Endothelial cell of umbilical vein (primary cell): ENCODE measurements at regions of chr3 and their contacts with region 1.

Region 1: GRCh38 chr3:197256836-197257444 is 41.5 kb downstream of the DLG1 start:
- DNase-seq: peak; percentile 71
- H3K4me3 ChIP-seq: no peak overlapping the region
- H3K27ac ChIP-seq: no peak overlapping the region
- H3K4me1 ChIP-seq: no peaks in the 10 kb centered on the region
- H3K27me3 ChIP-seq: no peaks in the 10 kb centered on the region
- CTCF ChIP-seq: peak; percentile 34 to 50
- POLR2A ChIP-seq: no peak

Region 2: GRCh38 chr3:197224034-197224444 is 32.9 kb before region 1 on chr3:
- CTCF ChIA-PET with region 1: interaction called, 16 read pairs
- POLR2A ChIA-PET with region 1: no interaction called
- dilution Hi-C with region 1: no loop called
- intact Hi-C with region 1: no loop called
- DNase-seq: peak; percentile 64
- H3K4me3 ChIP-seq: no peak overlapping the region
- H3K27ac ChIP-seq: no peak overlapping the region
- H3K4me1 ChIP-seq: no peaks in the 10 kb centered on the region
- H3K27me3 ChIP-seq: no peaks in the 10 kb centered on the region
- CTCF ChIP-seq: peak; percentile 26
- POLR2A ChIP-seq: no peak

Region 3: GRCh38 chr3:197244751-197245150 is 12.2 kb before region 1 on chr3:
- CTCF ChIA-PET with region 1: interaction called, 11 read pairs
- POLR2A ChIA-PET with region 1: no interaction called
- dilution Hi-C with region 1: no loop called
- intact Hi-C with region 1: no loop called
- DNase-seq: no peak
- H3K4me3 ChIP-seq: no peak overlapping the region
- H3K27ac ChIP-seq: no peak overlapping the region
- H3K4me1 ChIP-seq: no peaks in the 10 kb centered on the region
- H3K27me3 ChIP-seq: no peaks in the 10 kb centered on the region
- CTCF ChIP-seq: no peak
- POLR2A ChIP-seq: no peak

Region 4: GRCh38 chr3:197292083-197292646 is 35.2 kb after region 1 on chr3:
- CTCF ChIA-PET with region 1: interaction called, 10 read pairs
- POLR2A ChIA-PET with region 1: no interaction called
- dilution Hi-C with region 1: no loop called
- intact Hi-C with region 1: no loop called
- DNase-seq: no peak
- H3K4me3 ChIP-seq: no peak overlapping the region
- H3K27ac ChIP-seq: no peak overlapping the region
- H3K4me1 ChIP-seq: peaks cover 19% of the 10 kb centered on the region
- H3K27me3 ChIP-seq: no peaks in the 10 kb centered on the region
- CTCF ChIP-seq: no peak
- POLR2A ChIP-seq: no peak

Region 5: GRCh38 chr3:197466586-197467399 is 209.9 kb after region 1 on chr3:
- CTCF ChIA-PET with region 1: interaction called, 19 read pairs
- POLR2A ChIA-PET with region 1: no interaction called
- dilution Hi-C with region 1: no loop called
- intact Hi-C with region 1: no loop called
- DNase-seq: peak; percentile 69
- H3K4me3 ChIP-seq: no peak overlapping the region
- H3K27ac ChIP-seq: peak overlapping the region; percentile 36
- H3K4me1 ChIP-seq: peaks cover 33% of the 10 kb centered on the region
- H3K27me3 ChIP-seq: no peaks in the 10 kb centered on the region
- CTCF ChIP-seq: no peak
- POLR2A ChIP-seq: no peak

Region 6: GRCh38 chr3:197511130-197511529 is 254.2 kb after region 1 on chr3:
- CTCF ChIA-PET with region 1: interaction called, 38 read pairs
- POLR2A ChIA-PET with region 1: no interaction called
- dilution Hi-C with region 1: loop called (anchors 25 kb)
- intact Hi-C with region 1: loop called (anchors 1 kb)
- DNase-seq: no peak
- H3K4me3 ChIP-seq: no peak overlapping the region
- H3K27ac ChIP-seq: no peak overlapping the region
- H3K4me1 ChIP-seq: peaks cover 4% of the 10 kb centered on the region
- H3K27me3 ChIP-seq: no peaks in the 10 kb centered on the region
- CTCF ChIP-seq: no peak
- POLR2A ChIP-seq: no peak